CD8-positive, alpha-beta memory T cell (primary cell): ENCODE measurements at regions of chr12 and their contacts with region 1.

Region 1: DNA sequence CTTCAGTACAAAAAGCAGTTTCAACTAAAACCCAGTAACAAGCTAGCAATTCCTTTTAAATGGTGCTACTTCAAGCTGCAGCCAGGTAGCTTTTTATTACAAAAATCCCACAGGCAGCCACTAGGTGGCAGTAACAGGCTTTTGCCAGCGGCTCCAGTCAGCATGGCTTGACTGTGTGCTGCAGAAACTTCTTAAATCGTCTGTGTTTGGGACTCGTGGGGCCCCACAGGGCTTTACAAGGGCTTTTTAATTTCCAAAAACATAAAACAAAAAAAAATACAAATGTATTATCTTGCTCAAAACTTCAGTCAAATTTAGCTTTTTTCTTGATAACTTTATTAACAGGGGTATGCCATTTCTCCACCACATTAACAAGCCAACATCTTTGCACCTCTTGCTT is 3.6 kb upstream of the CLEC4E start:
- DNase-seq: peak; percentile 56 to 82 (median 62)
- H3K4me3 ChIP-seq: no peak overlapping the region
- H3K4me3 Mint-ChIP-seq: peak overlapping the region in 6 of 7 donors; percentile 6 to 59 (median 32)
- H3K27ac ChIP-seq: no peak overlapping the region
- H3K27ac Mint-ChIP-seq: no peak overlapping the region
- H3K4me1 ChIP-seq: no peaks in the 10 kb centered on the region
- H3K4me1 Mint-ChIP-seq: peaks cover 9 to 14% (median 10%) of the 10 kb centered on the region in 3 donors
- H3K27me3 ChIP-seq: peaks cover 10% of the 10 kb centered on the region
- H3K27me3 Mint-ChIP-seq: peaks cover 18 to 32% of the 10 kb centered on the region in 2 donors

Region 2: GRCh38 chr12:8532045-8532444 is 12.2 kb before region 1 on chr12:
- CTCF ChIA-PET with region 1: interaction called, 17 read pairs
- POLR2A ChIA-PET with region 1: no interaction called
- DNase-seq: no peak
- H3K4me3 ChIP-seq: no peak overlapping the region
- H3K4me3 Mint-ChIP-seq: no peak overlapping the region
- H3K27ac ChIP-seq: no peak overlapping the region
- H3K27ac Mint-ChIP-seq: no peak overlapping the region
- H3K4me1 ChIP-seq: no peaks in the 10 kb centered on the region
- H3K4me1 Mint-ChIP-seq: no peaks in the 10 kb centered on the region
- H3K27me3 ChIP-seq: no peaks in the 10 kb centered on the region
- H3K27me3 Mint-ChIP-seq: peaks cover 14 to 52% of the 10 kb centered on the region in 2 donors

Region 3: GRCh38 chr12:8564656-8565055 is 20.4 kb after region 1 on chr12:
- CTCF ChIA-PET with region 1: interaction called, 17 read pairs
- POLR2A ChIA-PET with region 1: no interaction called
- DNase-seq: no peak
- H3K4me3 ChIP-seq: no peak overlapping the region
- H3K4me3 Mint-ChIP-seq: no peak overlapping the region
- H3K27ac ChIP-seq: no peak overlapping the region
- H3K27ac Mint-ChIP-seq: no peak overlapping the region
- H3K4me1 ChIP-seq: no peaks in the 10 kb centered on the region
- H3K4me1 Mint-ChIP-seq: no peaks in the 10 kb centered on the region
- H3K27me3 ChIP-seq: no peaks in the 10 kb centered on the region
- H3K27me3 Mint-ChIP-seq: peaks cover 3 to 16% of the 10 kb centered on the region in 2 donors

Region 4: GRCh38 chr12:8590842-8591550 is 46.7 kb after region 1 on chr12:
- CTCF ChIA-PET with region 1: interaction called, 10 read pairs
- POLR2A ChIA-PET with region 1: no interaction called
- DNase-seq: no peak
- H3K4me3 ChIP-seq: no peak overlapping the region
- H3K4me3 Mint-ChIP-seq: peak overlapping the region in 3 of 7 donors; percentile 25 to 59 (median 52)
- H3K27ac ChIP-seq: no peak overlapping the region
- H3K27ac Mint-ChIP-seq: peak overlapping the region in 3 of 8 donors; percentile 0 to 77 (median 43)
- H3K4me1 ChIP-seq: no peaks in the 10 kb centered on the region
- H3K4me1 Mint-ChIP-seq: peaks cover 9 to 10% (median 10%) of the 10 kb centered on the region in 3 donors
- H3K27me3 ChIP-seq: no peaks in the 10 kb centered on the region
- H3K27me3 Mint-ChIP-seq: peaks cover 0 to 2% of the 10 kb centered on the region in 2 donors

Region 5: DNA sequence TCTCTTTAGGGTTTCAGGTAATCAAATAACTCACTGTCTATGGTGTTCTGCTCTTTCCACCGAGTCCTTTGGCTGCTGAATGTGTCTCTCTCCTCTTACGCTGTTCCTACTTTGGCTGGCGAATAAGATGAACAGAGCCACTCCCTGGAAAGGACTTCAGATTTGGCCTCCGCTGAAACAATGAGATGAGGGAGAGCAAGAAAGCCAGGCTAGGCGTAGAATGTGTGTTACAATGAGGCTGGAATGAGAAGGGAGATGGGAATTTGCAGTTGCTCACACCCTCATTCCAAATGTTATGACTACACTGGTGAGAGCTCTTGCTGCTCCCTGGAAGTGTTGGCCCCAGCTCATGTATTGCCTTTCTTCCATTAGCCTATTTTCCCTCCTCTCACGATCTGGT is 118.3 kb after region 1 on chr12 and contains the start of gene MFAP5:
- CTCF ChIA-PET with region 1: interaction called, 12 read pairs
- POLR2A ChIA-PET with region 1: no interaction called
- DNase-seq: no peak
- H3K4me3 ChIP-seq: no peak within 1 kb of the TSS
- H3K4me3 Mint-ChIP-seq: no peak within 1 kb of the TSS
- H3K27ac ChIP-seq: no peak within 1 kb of the TSS
- H3K27ac Mint-ChIP-seq: no peak within 1 kb of the TSS
- H3K4me1 ChIP-seq: no peaks in the 10 kb centered on the region
- H3K4me1 Mint-ChIP-seq: no peaks in the 10 kb centered on the region
- H3K27me3 ChIP-seq: no peaks in the 10 kb centered on the region
- H3K27me3 Mint-ChIP-seq: peaks cover 8 to 10% of the 10 kb centered on the region in 2 donors
- total RNA-seq, gene MFAP5: not detected

Region 6: DNA sequence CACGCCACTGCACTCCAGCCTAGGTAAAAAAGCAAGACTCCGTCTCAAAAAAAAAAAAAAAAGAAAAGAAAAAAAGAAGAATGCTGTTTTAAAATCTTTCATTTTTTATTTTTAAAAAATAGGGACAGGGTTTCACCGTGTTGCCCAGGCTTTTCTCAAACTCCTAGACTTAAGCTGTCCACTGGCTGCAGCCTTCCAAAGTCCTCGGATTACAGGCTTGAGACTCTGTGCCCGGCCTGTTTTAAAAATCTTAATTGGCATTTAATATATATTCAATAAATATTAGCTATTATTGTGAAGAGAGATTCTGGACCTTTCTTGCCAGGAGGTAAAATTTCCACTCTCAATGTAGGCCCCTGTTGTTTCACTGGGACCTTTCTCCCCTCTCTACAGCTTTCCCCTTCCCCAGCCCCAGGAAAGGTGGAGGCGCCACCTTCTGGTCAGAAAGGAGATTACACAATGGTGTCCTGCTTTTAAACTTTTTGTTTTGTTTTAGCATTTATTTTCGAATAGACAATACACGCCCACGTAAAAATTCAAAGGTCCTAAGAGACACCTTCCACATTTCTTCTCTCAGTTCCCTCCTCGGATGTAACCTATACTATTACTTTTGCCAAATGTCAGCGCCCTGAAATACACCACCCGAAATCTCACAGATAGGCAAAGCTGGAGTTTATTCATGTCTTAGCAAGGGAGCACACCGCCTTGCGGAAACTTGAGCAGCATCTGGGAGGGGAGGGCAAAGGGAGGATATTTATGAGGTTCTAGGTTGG is 346.2 kb after region 1 on chr12:
- CTCF ChIA-PET with region 1: interaction called, 37 read pairs
- POLR2A ChIA-PET with region 1: no interaction called
- DNase-seq: peak; percentile 31 to 68 (median 50)
- H3K4me3 ChIP-seq: peak overlapping the region; percentile 69
- H3K4me3 Mint-ChIP-seq: peak overlapping the region; percentile 84 to 97 (median 93)
- H3K27ac ChIP-seq: no peak overlapping the region
- H3K27ac Mint-ChIP-seq: peak overlapping the region in 7 of 8 donors; percentile 57 to 94 (median 86)
- H3K4me1 ChIP-seq: no peaks in the 10 kb centered on the region
- H3K4me1 Mint-ChIP-seq: peaks cover 4 to 7% (median 6%) of the 10 kb centered on the region in 3 donors
- H3K27me3 ChIP-seq: no peaks in the 10 kb centered on the region
- H3K27me3 Mint-ChIP-seq: peaks cover 1 to 6% of the 10 kb centered on the region in 2 donors